Activated T-helper 1 cell treated with anti-CD3 and anti-CD28 coated beads, Interleukin-12 subunit alpha, Interleukin-12 subunit beta, Interleukin-2, Interleukin-4 antibody, amounts not matched to agents 30 ng/mL and 10 ng/mL and 1 ng/mL, durations not matched to agents 14 hours and 24 hours and 36 hours (primary cell): ENCODE measurements at regions of chr12 and their contacts with region 1.

Region 1: DNA sequence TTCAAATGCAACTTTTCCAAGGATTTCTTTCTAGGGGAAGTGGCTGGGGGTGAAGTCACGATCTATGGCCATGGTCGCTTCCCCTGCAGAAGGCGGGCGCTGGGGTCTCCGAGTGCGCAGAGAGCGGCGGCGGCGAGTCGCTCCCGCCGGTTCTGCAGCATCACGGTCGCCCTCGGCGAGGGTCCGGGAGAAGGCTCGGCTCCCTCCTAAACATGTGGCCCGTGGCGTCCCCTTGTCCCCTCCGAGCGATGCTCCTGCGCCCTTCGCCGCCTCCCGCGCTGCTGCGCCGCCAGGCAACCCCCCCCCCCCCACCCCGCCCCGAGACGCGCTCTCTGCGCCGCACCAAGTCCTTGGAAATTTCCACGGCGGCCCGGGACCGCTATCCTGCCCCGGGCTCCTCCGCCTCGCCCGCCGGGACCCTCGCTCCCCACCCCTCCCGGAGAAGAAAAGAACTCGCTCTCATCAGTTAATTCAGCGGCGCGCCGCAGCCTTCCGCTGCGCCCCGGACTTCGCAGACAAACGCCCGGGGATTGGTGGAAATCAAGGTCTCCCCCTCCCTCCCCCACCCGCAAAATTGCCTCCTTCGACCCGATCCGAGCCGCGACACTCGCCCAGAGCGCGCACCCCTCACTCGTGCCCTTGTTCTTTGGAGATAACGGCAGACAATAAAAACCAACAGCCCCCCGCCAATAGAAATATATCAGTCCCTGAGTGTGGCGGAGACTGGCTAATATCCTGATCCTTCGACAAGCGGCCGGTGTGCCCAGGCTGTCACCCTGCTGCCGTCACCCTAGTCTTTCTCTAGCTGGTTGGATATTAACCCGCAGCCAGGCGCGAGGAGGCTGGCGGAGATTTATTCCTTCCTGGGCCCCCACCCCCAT is at the start of gene ST8SIA1:
- DNase-seq: peak; percentile 11
- H3K4me3 Mint-ChIP-seq: peak within 1 kb of the TSS; percentile 91
- H3K27ac Mint-ChIP-seq: peak within 1 kb of the TSS; percentile 56
- H3K4me1 Mint-ChIP-seq: peaks cover 27% of the 10 kb centered on the region
- H3K27me3 Mint-ChIP-seq: peaks cover 52% of the 10 kb centered on the region
- total RNA-seq, gene ST8SIA1: 0.17 and 0.57 TPM in 2 replicates

Region 2: DNA sequence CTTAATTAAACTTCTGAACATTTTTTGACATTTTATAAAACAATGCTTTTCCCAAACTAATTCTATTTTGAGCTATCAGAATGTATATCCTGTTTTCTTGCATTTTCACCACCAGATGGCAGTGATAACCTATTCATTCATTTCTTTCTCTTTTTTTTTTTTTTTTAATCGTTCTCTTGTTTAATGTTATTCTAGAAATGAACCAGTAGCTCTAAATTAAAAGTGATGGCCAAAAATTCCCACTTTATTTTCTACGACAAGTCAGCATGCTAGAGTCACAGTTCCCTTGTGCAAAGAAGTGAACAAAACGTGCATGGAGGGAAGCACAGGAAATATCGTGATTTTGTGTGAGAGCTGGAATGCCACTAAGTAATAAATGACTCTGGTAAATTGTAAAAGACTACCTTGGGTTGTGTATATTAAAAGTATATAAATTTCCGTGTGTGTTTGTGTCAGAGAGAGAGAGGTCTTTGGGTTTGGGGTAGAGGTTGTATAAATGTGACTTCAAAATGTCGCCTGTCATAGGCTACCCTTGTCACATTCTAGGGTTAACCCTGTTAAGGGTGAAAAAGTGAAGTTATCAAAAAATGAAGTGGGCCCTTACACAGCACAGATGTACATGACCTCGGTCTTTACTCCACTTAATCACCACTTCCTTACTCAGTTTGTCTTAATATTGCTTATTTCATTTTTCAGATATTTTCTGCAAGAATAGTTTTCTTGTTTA is 636.6 kb before region 1 on chr12:
- intact Hi-C with region 1: loop called (anchors 2 kb)
- DNase-seq: no peak
- H3K4me3 Mint-ChIP-seq: no peak overlapping the region
- H3K27ac Mint-ChIP-seq: no peak overlapping the region
- H3K4me1 Mint-ChIP-seq: no peaks in the 10 kb centered on the region
- H3K27me3 Mint-ChIP-seq: peaks cover 10% of the 10 kb centered on the region

Region 3: DNA sequence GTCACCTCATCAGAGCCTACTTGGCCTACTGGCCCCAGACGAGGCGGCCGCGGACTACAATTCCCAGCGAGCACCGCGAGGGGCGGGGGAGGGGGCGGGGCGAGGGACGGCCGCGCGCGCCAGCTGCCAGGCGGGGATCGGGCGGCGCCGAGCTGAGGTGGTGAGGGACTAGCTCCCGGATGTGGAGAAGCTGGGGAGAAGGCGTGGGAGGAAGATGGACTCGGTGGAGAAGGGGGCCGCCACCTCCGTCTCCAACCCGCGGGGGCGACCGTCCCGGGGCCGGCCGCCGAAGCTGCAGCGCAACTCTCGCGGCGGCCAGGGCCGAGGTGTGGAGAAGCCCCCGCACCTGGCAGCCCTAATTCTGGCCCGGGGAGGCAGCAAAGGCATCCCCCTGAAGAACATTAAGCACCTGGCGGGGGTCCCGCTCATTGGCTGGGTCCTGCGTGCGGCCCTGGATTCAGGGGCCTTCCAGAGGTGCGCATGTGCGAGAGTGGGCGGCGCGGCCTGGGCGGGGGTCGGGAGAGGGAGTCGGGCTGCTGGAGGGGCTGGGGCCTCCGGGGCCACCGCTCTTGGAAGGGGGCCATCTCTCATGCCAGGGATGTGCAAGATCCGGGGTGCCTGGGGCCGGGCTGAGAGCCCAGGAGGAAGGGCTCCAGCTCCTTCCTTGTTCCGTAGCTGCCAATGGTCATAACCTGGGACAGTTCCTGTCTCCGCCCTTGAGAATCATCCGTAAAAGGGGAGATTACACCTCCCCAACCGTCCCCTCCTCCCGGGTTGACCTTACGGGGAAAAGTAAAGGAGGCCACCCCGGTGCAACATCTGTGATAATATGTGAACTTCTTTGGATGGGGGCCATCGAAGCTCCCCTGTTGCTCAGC is 288.3 kb before region 1 on chr12 and contains the start of gene CMAS:
- intact Hi-C with region 1: loop called (anchors 1 kb)
- DNase-seq: peak; percentile 70
- H3K4me3 Mint-ChIP-seq: peak within 1 kb of the TSS; percentile 95
- H3K27ac Mint-ChIP-seq: peak within 1 kb of the TSS; percentile 88
- H3K4me1 Mint-ChIP-seq: peaks cover 48% of the 10 kb centered on the region
- H3K27me3 Mint-ChIP-seq: no peaks in the 10 kb centered on the region
- total RNA-seq, gene CMAS: 34.1 and 34.9 TPM in 2 replicates

Region 4: GRCh38 chr12:22100958-22101748 is 233.5 kb before region 1 on chr12:
- intact Hi-C with region 1: loop called (anchors 1 kb)
- DNase-seq: peak; percentile 25
- H3K4me3 Mint-ChIP-seq: no peak overlapping the region
- H3K27ac Mint-ChIP-seq: no peak overlapping the region
- H3K4me1 Mint-ChIP-seq: peaks cover 7% of the 10 kb centered on the region
- H3K27me3 Mint-ChIP-seq: peaks cover 12% of the 10 kb centered on the region

Region 5: GRCh38 chr12:22443379-22444316 is 109.0 kb after region 1 on chr12:
- intact Hi-C with region 1: loop called (anchors 1 kb)
- DNase-seq: peak; percentile 37
- H3K4me3 Mint-ChIP-seq: no peak overlapping the region
- H3K27ac Mint-ChIP-seq: no peak overlapping the region
- H3K4me1 Mint-ChIP-seq: peaks cover 9% of the 10 kb centered on the region
- H3K27me3 Mint-ChIP-seq: peaks cover 9% of the 10 kb centered on the region

Region 6: GRCh38 chr12:22624870-22625761 is 290.5 kb after region 1 on chr12 and contains the start of gene ETNK1:
- intact Hi-C with region 1: loop called (anchors 2 kb)
- DNase-seq: peak; percentile 83
- H3K4me3 Mint-ChIP-seq: peak within 1 kb of the TSS; percentile 93
- H3K27ac Mint-ChIP-seq: peak within 1 kb of the TSS; percentile 87
- H3K4me1 Mint-ChIP-seq: peaks cover 44% of the 10 kb centered on the region
- H3K27me3 Mint-ChIP-seq: peaks cover 13% of the 10 kb centered on the region
- total RNA-seq, gene ETNK1: 106 and 111 TPM in 2 replicates

Region 7: GRCh38 chr12:24109381-24110039 is 1774.9 kb after region 1 on chr12:
- intact Hi-C with region 1: no loop called
- DNase-seq: no peak
- H3K4me3 Mint-ChIP-seq: no peak overlapping the region
- H3K27ac Mint-ChIP-seq: no peak overlapping the region
- H3K4me1 Mint-ChIP-seq: no peaks in the 10 kb centered on the region
- H3K27me3 Mint-ChIP-seq: no peaks in the 10 kb centered on the region